Calu3 (cell line): ENCODE measurements at regions of chr1 and their contacts with region 1.

Region 1: GRCh38 chr1:110106013-110106941 is 6.0 kb upstream of the UBL4B start:
- DNase-seq: peak; percentile 69
- H3K4me3 Mint-ChIP-seq: no peak overlapping the region
- H3K27ac Mint-ChIP-seq: no peak overlapping the region
- H3K4me1 Mint-ChIP-seq: no peaks in the 10 kb centered on the region
- H3K27me3 Mint-ChIP-seq: peaks cover 75% of the 10 kb centered on the region
- CTCF ChIP-seq: no peak

Region 2: GRCh38 chr1:109816175-109816811 is 290.0 kb before region 1 on chr1:
- CTCF ChIA-PET with region 1: no interaction called
- intact Hi-C with region 1: no loop called
- DNase-seq: no peak
- H3K4me3 Mint-ChIP-seq: no peak overlapping the region
- H3K27ac Mint-ChIP-seq: no peak overlapping the region
- H3K4me1 Mint-ChIP-seq: peaks cover 6% of the 10 kb centered on the region
- H3K27me3 Mint-ChIP-seq: no peaks in the 10 kb centered on the region
- CTCF ChIP-seq: no peak

Region 3: DNA sequence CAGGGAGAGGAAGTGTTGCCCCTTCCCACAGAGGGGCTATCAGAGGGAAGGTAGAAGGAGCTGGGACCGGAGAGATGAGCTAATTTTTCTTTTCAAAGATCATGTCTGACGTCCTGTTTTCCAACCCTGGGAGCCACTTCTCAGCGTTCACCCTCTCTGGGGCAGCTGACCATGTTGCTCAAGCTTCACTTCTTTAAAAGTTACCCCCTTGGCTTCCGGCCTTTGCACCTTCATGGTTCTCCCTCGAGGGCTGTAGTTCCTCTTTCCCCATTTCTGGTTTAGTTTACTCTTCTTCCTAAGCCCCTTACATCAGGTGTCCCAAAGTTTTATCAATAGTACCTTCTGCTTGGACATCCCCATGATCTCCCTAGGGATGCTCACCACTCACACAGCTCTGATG is 219.4 kb before region 1 on chr1:
- CTCF ChIA-PET with region 1: no interaction called
- intact Hi-C with region 1: no loop called
- DNase-seq: no peak
- H3K4me3 Mint-ChIP-seq: no peak overlapping the region
- H3K27ac Mint-ChIP-seq: no peak overlapping the region
- H3K4me1 Mint-ChIP-seq: peaks cover 7% of the 10 kb centered on the region
- H3K27me3 Mint-ChIP-seq: no peaks in the 10 kb centered on the region
- CTCF ChIP-seq: no peak

Region 4: DNA sequence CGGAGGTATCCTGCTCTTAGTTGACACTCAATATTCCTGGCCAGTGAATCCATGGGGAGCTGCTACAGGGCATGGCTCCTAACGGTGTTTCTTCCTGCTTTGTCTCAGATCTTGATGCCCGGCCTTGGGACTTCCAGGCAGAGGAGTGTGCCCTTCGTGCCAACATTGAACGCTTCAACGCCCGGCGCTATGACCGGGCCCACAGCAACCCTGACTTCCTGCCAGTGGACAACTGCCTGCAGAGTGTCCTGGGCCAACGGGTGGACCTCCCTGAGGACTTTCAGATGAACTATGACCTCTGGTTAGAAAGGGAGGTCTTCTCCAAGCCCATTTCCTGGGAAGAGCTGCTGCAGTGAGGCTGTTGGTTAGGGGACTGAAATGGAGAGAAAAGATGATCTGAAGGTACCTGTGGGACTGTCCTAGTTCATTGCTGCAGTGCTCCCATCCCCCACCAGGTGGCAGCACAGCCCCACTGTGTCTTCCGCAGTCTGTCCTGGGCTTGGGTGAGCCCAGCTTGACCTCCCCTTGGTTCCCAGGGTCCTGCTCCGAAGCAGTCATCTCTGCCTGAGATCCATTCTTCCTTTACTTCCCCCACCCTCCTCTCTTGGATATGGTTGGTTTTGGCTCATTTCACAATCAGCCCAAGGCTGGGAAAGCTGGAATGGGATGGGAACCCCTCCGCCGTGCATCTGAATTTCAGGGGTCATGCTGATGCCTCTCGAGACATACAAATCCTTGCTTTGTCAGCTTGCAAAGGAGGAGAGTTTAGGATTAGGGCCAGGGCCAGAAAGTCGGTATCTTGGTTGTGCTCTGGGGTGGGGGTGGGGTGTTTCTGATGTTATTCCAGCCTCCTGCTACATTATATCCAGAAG is 52.5 kb before region 1 on chr1:
- CTCF ChIA-PET with region 1: no interaction called
- intact Hi-C with region 1: no loop called
- DNase-seq: peak; percentile 68
- H3K4me3 Mint-ChIP-seq: no peak overlapping the region
- H3K27ac Mint-ChIP-seq: no peak overlapping the region
- H3K4me1 Mint-ChIP-seq: peaks cover 3% of the 10 kb centered on the region
- H3K27me3 Mint-ChIP-seq: no peaks in the 10 kb centered on the region
- CTCF ChIP-seq: peak; percentile 71

Region 5: DNA sequence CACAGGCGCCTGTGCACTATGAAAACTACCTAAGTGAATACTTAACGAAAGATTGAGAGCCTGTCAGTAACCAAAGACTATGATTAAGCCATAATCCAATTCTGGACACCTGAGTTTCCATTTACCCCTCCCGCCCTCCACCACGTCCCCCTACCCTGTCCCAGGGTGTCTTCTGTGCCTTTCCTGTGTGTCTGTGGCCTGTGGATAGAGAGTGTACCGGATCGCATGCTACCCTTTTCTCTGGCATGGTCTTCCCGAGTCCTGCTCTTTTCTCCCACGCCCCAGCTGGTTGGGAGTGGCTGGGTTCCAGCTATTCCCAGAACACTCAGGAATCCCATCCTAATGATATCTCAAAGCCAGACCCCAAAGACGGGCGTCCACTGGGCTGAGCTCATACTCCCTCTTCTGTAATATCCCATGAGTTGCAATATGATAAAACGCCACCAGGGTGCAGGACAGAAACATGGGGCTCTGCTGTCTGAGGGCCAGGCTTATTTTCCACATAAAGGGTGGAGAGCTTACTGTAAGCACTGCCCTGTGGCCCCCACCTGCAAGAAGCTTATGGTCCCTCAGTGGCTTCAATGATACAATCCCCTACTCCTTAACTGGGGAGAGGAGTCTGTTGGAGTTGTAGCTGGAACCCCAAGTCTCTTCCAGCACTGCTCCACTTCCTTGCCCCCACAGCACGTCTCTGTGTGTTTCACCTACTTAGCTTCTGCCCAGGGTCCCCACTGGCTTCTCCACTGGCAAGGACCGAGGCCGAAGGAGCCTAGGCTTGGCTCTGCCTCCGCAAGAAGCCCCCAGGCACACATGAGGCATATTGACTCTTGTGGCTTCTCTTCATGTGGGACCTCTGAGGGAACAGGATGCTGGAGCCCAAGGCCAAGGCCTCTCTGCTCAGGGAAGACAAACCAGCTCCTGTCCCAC is 18.2 kb before region 1 on chr1:
- CTCF ChIA-PET with region 1: interaction called, 10 read pairs
- intact Hi-C with region 1: no loop called
- DNase-seq: peak; percentile 66
- H3K4me3 Mint-ChIP-seq: no peak overlapping the region
- H3K27ac Mint-ChIP-seq: no peak overlapping the region
- H3K4me1 Mint-ChIP-seq: no peaks in the 10 kb centered on the region
- H3K27me3 Mint-ChIP-seq: peaks cover 93% of the 10 kb centered on the region
- CTCF ChIP-seq: peak; percentile 39